ENCODE measurements at regions of chr1 and their contacts with region 1.

Region 1: GRCh38 chr1:228500901-228501871 is 14.0 kb downstream of the RNF187 start:
- H3K4me3 ChIP-seq: no peak overlapping the region
- H3K27ac ChIP-seq: no peak overlapping the region
- H3K4me1 ChIP-seq: no peaks in the 10 kb centered on the region
- CTCF ChIP-seq: peak; percentile 85

Region 2: GRCh38 chr1:228378873-228379460 is 122.2 kb before region 1 on chr1:
- CTCF ChIA-PET with region 1: interaction called, 12 read pairs
- POLR2A ChIA-PET with region 1: no interaction called
- H3K4me3 ChIP-seq: peak overlapping the region; percentile 52
- H3K27ac ChIP-seq: peak overlapping the region; percentile 55; the same call in 1 of the 2 replicates
- H3K4me1 ChIP-seq: peaks cover 3% of the 10 kb centered on the region; the same call in 1 of the 2 replicates
- CTCF ChIP-seq: no peak

Region 3: DNA sequence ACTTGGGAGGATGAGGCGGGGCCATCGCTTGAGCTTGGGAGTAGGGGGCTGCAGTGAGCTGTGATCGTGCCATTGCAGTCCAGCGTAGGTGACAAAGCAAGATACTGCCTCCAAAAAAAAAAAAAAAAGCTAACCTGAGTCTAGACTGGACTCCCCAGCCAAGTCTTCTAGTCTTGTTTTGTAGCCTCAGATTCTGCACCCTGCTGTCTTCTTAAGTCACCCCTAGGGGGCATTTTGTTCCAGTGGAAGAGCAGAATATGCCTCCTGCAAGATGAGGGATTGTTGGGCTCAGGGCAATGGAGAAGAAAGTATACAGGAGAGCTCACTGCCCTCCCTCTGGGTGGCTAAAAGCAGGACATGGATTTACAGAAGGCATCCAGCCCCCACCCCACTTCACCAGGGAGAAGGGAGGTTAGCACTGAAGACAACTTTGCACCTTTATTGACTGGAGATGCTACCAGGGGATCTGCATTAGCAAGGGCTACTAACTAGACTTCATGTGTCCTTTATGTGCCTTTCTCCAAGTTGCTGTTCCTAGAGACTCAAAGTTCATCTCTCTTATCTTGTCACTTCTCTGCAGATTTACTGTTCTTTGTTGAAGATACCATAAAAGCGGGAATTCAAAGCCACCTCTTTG is 29.3 kb before region 1 on chr1:
- CTCF ChIA-PET with region 1: interaction called, 21 read pairs
- POLR2A ChIA-PET with region 1: no interaction called
- H3K4me3 ChIP-seq: no peak overlapping the region
- H3K27ac ChIP-seq: no peak overlapping the region
- H3K4me1 ChIP-seq: no peaks in the 10 kb centered on the region
- CTCF ChIP-seq: peak; percentile 50; the same call in 1 of the 2 replicates

Region 4: GRCh38 chr1:228486596-228487335 is 14.4 kb before region 1 on chr1:
- CTCF ChIA-PET with region 1: interaction called, 23 read pairs
- POLR2A ChIA-PET with region 1: no interaction called
- H3K4me3 ChIP-seq: peak overlapping the region; percentile 79
- H3K27ac ChIP-seq: peak overlapping the region; percentile 91
- H3K4me1 ChIP-seq: peaks cover 7% of the 10 kb centered on the region
- CTCF ChIP-seq: peak; percentile 46

Region 5: DNA sequence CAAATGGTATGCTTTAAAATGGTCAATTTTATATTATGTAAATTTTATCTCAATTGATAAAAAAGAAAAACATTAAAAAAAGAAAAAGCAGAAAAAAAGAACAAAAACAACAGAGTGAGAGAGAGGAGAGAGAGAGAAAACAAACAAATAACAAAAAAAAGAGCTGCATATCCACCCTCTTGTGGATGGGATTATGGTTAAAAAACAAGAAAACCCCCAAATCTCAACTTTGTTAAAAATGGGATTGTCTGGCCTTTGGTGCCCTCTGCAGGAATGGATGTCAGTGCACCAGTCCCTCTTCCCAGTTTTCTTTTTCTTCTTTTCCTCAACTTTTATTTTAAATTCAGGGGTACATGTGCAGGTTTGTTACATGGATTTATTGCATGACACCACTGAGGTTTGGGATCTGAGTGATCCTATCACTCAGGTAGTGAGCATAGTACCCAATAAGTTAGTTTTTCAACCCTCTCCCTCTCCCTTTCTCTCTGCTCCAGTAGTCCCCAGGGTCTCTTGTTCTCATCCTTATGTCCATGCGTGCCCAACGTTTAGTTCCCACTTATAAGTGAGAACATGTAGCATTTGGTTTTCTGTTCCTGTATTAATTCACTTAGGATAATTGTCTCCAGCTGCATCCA is 14.1 kb after region 1 on chr1:
- CTCF ChIA-PET with region 1: interaction called, 23 read pairs
- POLR2A ChIA-PET with region 1: no interaction called
- H3K4me3 ChIP-seq: no peak overlapping the region
- H3K27ac ChIP-seq: no peak overlapping the region
- H3K4me1 ChIP-seq: no peaks in the 10 kb centered on the region
- CTCF ChIP-seq: peak; percentile 89

Measured in HEK293 (cell line).